Transverse colon (tissue), 4 donors: ENCODE measurements at regions of chr4 and their contacts with region 1.

Region 1: DNA sequence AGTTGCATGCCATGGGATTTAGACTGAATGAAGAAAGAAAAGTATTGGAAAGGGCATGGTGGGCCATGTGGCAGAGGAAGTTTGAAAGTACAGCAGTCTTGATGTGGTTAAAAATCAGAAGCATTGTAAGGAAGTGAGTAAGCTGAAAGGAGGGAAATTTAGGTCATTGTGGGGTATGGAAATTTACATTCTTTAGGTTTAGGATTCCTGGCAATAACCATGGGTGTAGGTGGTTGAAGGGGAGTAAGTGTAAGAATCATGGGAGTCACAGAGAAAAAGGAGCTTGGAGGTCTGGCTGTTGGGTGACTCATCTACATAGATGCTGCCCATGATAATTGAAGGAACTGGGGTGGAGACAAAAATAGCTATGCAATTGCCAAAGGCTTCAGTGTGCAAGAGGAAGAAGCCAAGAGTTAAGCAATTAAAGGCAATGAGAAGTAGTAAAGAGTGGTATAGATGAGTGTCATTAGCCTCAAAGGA is 243.8 kb upstream of the LDB2 start:
- DNase-seq: no peak
- H3K4me3 ChIP-seq: no peak overlapping the region
- H3K27ac ChIP-seq: no peak overlapping the region
- H3K4me1 ChIP-seq: no peaks in the 10 kb centered on the region
- H3K27me3 ChIP-seq: no peaks in the 10 kb centered on the region
- CTCF ChIP-seq: no peak
- EP300 ChIP-seq: no peak
- POLR2A ChIP-seq: no peak

Region 2: GRCh38 chr4:17117746-17118145 is 24.5 kb before region 1 on chr4:
- in situ Hi-C with region 1: no loop called
- intact Hi-C with region 1: loop called (anchors 1 kb)
- DNase-seq: no peak
- H3K4me3 ChIP-seq: no peak overlapping the region
- H3K27ac ChIP-seq: no peak overlapping the region
- H3K4me1 ChIP-seq: no peaks in the 10 kb centered on the region
- H3K27me3 ChIP-seq: no peaks in the 10 kb centered on the region
- CTCF ChIP-seq: no peak
- EP300 ChIP-seq: no peak
- POLR2A ChIP-seq: no peak